ENCODE measurements at regions of chr9 and their contacts with region 1.

Region 1: GRCh38 chr9:111631071-111631971 is at the start of gene DNAJC25:
- DNase-seq: peak; percentile 93
- H3K4me3 Mint-ChIP-seq: peak within 1 kb of the TSS; percentile 97
- H3K27ac Mint-ChIP-seq: peak within 1 kb of the TSS; percentile 91
- H3K4me1 Mint-ChIP-seq: peaks cover 20% of the 10 kb centered on the region
- H3K27me3 Mint-ChIP-seq: no peaks in the 10 kb centered on the region
- CTCF ChIP-seq: no peak
- total RNA-seq, gene DNAJC25: 5.0 and 6.3 TPM in 2 replicates

Region 2: DNA sequence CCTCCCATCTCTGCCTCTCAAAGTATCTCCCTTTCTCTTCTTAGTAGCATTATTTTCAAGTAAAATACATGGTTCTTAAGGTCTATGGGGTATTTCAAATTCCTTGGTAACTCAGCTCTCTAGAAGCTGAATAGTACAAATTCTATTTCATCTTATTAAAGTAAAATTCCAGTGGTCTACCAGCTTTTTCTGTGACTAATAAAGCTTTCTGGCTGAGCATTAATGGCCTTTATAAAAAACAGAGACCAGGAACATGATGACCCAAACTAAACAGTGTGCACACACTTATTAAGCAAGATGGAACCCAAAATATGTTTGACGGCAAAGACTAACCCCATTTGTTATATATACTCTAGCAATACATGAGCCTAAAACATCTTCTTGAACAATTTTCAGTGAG is 443.9 kb before region 1 on chr9:
- CTCF ChIA-PET with region 1: no interaction called
- intact Hi-C with region 1: no loop called
- DNase-seq: no peak
- H3K4me3 Mint-ChIP-seq: no peak overlapping the region
- H3K27ac Mint-ChIP-seq: no peak overlapping the region
- H3K4me1 Mint-ChIP-seq: no peaks in the 10 kb centered on the region
- H3K27me3 Mint-ChIP-seq: no peaks in the 10 kb centered on the region
- CTCF ChIP-seq: no peak

Region 3: GRCh38 chr9:111728621-111729366 is 97.5 kb after region 1 on chr9:
- CTCF ChIA-PET with region 1: no interaction called
- intact Hi-C with region 1: loop called (anchors 10 kb)
- DNase-seq: no peak
- H3K4me3 Mint-ChIP-seq: no peak overlapping the region
- H3K27ac Mint-ChIP-seq: peak overlapping the region; percentile 68
- H3K4me1 Mint-ChIP-seq: peaks cover 18% of the 10 kb centered on the region
- H3K27me3 Mint-ChIP-seq: no peaks in the 10 kb centered on the region
- CTCF ChIP-seq: no peak